Adrenal gland (tissue), 19 donors: ENCODE measurements at regions of chr20 and their contacts with region 1.

Region 1: DNA sequence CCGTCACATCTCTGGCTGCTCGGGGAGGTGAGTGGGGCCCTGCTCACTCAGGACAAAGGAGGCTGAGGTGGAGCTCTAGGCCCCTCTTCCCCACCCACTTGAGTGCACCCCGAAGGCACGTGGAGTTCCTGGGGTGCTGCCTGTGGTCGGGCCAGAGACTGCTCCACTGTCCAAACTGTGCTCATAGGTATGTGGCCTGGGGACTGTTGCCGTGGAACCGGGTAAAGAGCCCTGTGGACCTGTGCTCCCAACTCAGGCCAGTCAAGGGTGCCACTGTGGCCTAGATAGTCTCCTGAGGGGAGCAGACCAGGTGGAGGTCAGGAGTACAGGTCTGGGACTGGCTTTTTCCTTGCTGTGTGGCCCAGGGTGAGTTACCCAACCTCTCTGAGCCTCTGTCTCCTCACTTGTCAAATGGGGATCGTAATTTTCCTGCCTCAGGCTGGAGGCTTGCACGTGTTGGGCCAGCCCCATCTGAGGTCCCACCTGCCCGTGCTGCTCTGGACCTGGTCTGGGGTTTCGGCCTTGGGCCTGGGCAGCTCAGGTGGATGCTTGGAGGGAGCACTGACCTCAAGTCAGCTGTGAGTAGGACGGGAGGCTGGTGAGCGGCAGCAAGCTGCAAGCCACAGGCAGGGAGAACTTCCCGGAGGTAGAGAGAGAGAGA is 12.4 kb upstream of the NPBWR2 start:
- DNase-seq: peak in 5 of 7 donors; percentile 9 to 46 (median 20)
- H3K4me3 ChIP-seq: no peak overlapping the region
- H3K27ac ChIP-seq: no peak overlapping the region
- H3K4me1 ChIP-seq: no peaks in the 10 kb centered on the region
- H3K27me3 ChIP-seq: no peaks in the 10 kb centered on the region
- CTCF ChIP-seq: no peak
- POLR2A ChIP-seq: no peak

Region 2: GRCh38 chr20:64038565-64039292 is 81.1 kb before region 1 on chr20:
- intact Hi-C with region 1: loop called in 1 of 2 experiments (anchors 10 kb)
- DNase-seq: peak; percentile 56 to 83 (median 67)
- H3K4me3 ChIP-seq: peak overlapping the region in 2 of 4 donors; percentile 12 to 50
- H3K27ac ChIP-seq: peak overlapping the region in 2 of 5 donors; percentile 54 to 55
- H3K4me1 ChIP-seq: peaks cover 8 to 25% of the 10 kb centered on the region in 2 donors
- H3K27me3 ChIP-seq: peaks cover 21% of the 10 kb centered on the region
- CTCF ChIP-seq: peak; percentile 50 to 68 (median 66)
- POLR2A ChIP-seq: no peak

Region 3: GRCh38 chr20:64203037-64203777 is 83.4 kb after region 1 on chr20:
- intact Hi-C with region 1: no loop called
- DNase-seq: peak in 1 of 7 donors; percentile 79
- H3K4me3 ChIP-seq: no peak overlapping the region
- H3K27ac ChIP-seq: peak overlapping the region in 1 of 5 donors; percentile 42
- H3K4me1 ChIP-seq: no peaks in the 10 kb centered on the region
- H3K27me3 ChIP-seq: no peaks in the 10 kb centered on the region
- CTCF ChIP-seq: no peak
- POLR2A ChIP-seq: no peak